HCT116 (cell line): ENCODE measurements at regions of chr12 and their contacts with region 1.

Region 1: GRCh38 chr12:131830335-131830913 is 2.2 kb downstream of the MMP17 start:
- DNase-seq: peak; percentile 23
- ATAC-seq: peak; percentile 71
- H3K4me3 ChIP-seq: peak overlapping the region; percentile 70 to 79
- H3K27ac ChIP-seq: peak overlapping the region; percentile 37; the same call in 1 of the 2 replicates
- H3K4me1 ChIP-seq: peaks cover 12 to 26% of the 10 kb centered on the region in 2 experiments; a peak in 3 of 4 replicates
- H3K27me3 ChIP-seq: no peaks in the 10 kb centered on the region
- CTCF ChIP-seq: peak; percentile 49 to 75 (median 70)
- POLR2A ChIP-seq: no peak
- RAD21 ChIP-seq: peak; percentile 95

Region 2: GRCh38 chr12:130761537-130762318 is 1068.7 kb before region 1 on chr12:
- CTCF ChIA-PET with region 1: no interaction called
- POLR2A ChIA-PET with region 1: no interaction called
- RAD21 ChIA-PET with region 1: no interaction called
- intact Hi-C with region 1: loop called (anchors 5 kb)
- DNase-seq: peak; percentile 29
- ATAC-seq: peak; percentile 72
- H3K4me3 ChIP-seq: no peak overlapping the region
- H3K27ac ChIP-seq: no peak overlapping the region
- H3K4me1 ChIP-seq: no peaks in the 10 kb centered on the region
- H3K27me3 ChIP-seq: no peaks in the 10 kb centered on the region
- CTCF ChIP-seq: peak; percentile 49 to 55 (median 52); a peak in 5 of 6 replicates
- POLR2A ChIP-seq: no peak
- RAD21 ChIP-seq: peak; percentile 86

Region 3: GRCh38 chr12:130916251-130916911 is 914.0 kb before region 1 on chr12:
- CTCF ChIA-PET with region 1: no interaction called
- POLR2A ChIA-PET with region 1: no interaction called
- RAD21 ChIA-PET with region 1: no interaction called
- intact Hi-C with region 1: loop called (anchors 2 kb)
- DNase-seq: peak; percentile 38
- ATAC-seq: peak; percentile 94
- H3K4me3 ChIP-seq: peak overlapping the region in 1 of 2 experiments; percentile 11; a peak in 2 of 4 replicates
- H3K27ac ChIP-seq: no peak overlapping the region
- H3K4me1 ChIP-seq: peaks cover 2 to 6% of the 10 kb centered on the region in 2 experiments; a peak in 1 of 4 replicates
- H3K27me3 ChIP-seq: peaks cover 10% of the 10 kb centered on the region; the same call in 1 of the 2 replicates
- CTCF ChIP-seq: peak; percentile 78 to 92 (median 87)
- POLR2A ChIP-seq: no peak
- RAD21 ChIP-seq: peak; percentile 97

Region 4: DNA sequence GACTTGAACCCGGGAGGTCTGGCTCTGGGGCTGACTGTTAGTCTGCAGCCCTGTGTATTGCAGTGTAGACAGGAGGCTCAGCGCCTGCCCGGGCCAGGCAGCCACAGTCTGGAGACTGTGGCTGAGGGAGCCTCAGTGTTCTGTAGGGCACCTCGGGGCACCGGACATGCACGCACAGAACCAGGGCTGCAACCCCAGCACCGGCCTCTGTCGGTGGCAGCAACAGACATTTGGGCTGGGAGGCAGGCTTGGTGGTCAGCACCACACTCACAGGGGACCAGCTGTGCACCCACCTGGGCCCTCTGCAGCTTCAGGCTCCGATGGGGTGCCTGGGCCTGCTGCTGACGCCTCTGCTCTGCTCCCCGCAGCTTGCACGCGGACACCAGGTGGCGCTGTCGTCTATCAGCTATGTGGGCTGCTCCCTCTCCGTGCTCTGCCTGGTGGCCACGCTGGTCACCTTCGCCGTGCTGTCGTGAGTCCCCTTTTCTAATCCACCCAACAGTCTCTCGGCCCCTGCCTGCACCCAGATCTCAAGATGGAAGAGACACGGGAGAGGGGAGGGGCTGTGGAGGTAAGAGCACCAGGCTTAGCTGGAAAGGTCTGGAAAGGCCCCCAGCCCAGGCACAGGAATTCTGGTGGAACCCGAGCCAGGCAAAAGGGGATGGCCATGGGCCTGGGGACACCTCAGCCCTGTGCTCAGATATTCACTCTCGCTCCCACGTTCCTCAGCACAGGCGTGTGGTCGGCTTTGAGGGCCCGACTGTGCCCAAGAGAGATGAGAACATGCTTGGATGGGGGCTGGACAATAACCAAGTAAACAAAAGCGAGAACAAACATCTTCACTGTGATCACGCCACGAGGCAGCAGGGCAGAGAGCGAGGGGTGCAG is 725.7 kb before region 1 on chr12:
- CTCF ChIA-PET with region 1: interaction called, 17 read pairs
- POLR2A ChIA-PET with region 1: no interaction called
- RAD21 ChIA-PET with region 1: no interaction called
- intact Hi-C with region 1: loop called (anchors 2 kb)
- DNase-seq: peak; percentile 64
- ATAC-seq: peak; percentile 99
- H3K4me3 ChIP-seq: no peak overlapping the region
- H3K27ac ChIP-seq: no peak overlapping the region
- H3K4me1 ChIP-seq: 0 out of 4 replicates have a peak, but pooled peaks cover 0 to 5% of the 10 kb centered on the region in 2 experiments
- H3K27me3 ChIP-seq: no peaks in the 10 kb centered on the region; the same call in 1 of the 2 replicates
- CTCF ChIP-seq: peak; percentile 89 to 96 (median 95)
- POLR2A ChIP-seq: no peak
- RAD21 ChIP-seq: peak; percentile 95

Region 5: DNA sequence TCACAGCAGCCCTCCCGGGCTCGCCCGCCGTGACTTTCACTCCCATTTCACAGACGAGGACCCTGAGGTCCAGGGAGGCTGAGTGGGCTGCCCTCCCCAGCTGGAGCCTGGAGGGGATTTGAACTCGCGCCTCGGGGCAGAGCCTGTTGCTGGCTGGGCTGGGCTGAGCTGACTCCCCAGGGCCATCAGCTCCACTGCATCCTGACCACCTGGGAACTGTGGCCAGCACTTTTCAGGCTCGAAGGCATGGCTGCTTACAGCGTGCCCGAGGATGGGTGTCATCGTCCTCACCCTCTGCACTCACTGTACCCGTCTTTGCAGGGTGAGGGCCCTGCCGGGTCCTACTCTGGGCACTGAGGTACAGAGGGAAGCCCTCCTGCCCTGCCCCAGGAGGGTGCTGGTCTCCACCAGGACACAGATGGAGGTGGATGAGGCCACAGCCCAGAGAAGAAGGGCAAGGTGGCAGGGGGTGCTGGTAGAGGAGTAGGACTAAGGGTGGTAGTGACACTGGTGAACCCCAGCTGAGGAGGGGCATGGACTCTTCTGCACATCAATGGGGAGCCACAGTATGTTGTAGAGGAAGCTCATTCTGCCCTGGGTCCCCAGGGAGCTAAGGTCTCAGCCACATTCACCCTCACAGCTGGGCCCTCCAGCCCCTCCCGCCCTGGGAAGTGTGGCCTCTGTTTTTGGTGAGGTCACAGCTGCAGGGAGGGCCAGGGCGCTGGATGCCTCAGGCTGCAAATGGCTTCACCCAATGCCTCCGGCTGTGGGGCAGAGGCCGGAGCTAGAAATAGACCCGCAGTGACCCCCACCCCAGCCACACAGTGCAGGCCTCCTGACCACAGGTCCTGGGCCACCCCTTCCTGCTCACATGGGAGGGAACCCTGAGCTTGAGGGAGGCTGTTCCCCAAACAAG is 484.6 kb before region 1 on chr12:
- CTCF ChIA-PET with region 1: no interaction called
- POLR2A ChIA-PET with region 1: no interaction called
- RAD21 ChIA-PET with region 1: no interaction called
- intact Hi-C with region 1: no loop called
- DNase-seq: no peak
- ATAC-seq: no peak
- H3K4me3 ChIP-seq: no peak overlapping the region
- H3K27ac ChIP-seq: no peak overlapping the region
- H3K4me1 ChIP-seq: no peaks in the 10 kb centered on the region
- H3K27me3 ChIP-seq: 0 out of 2 replicates have a peak, but pooled peaks cover 5% of the 10 kb centered on the region
- CTCF ChIP-seq: no peak
- POLR2A ChIP-seq: no peak
- RAD21 ChIP-seq: no peak

Region 6: DNA sequence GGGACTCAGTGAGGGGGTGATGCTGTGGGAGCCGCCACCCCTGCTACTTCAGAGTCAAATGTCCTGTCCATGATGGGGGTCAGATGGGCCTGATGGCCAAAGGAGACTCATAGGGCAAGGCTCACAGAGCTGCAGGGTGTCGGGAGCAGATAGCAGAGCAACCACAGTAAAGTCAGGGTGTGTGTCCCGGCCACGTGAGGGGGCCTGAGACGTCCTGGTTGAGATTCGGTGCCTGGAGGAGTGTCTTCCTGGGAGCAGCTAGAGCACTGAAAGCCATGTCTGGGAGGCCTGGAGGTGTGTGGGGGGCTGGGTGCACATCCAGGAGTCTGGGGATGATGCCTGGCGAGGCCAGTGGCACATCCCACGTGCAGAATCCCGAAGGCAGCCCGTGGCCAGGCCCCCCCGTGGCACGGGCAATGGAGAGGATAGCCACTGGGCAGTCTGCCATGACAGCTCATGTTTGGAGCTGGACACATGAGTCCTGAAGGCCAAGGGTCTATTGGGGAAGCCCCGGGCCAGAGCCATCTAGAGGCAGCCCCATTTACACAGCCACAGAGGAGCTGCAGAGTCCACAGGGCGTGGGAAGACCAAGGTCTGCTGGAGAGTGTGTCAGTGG is 427.5 kb before region 1 on chr12:
- CTCF ChIA-PET with region 1: no interaction called
- POLR2A ChIA-PET with region 1: no interaction called
- RAD21 ChIA-PET with region 1: no interaction called
- intact Hi-C with region 1: no loop called
- DNase-seq: no peak
- ATAC-seq: no peak
- H3K4me3 ChIP-seq: no peak overlapping the region
- H3K27ac ChIP-seq: no peak overlapping the region; the same call in 1 of the 2 replicates
- H3K4me1 ChIP-seq: peaks cover 7 to 11% of the 10 kb centered on the region in 2 experiments; a peak in 3 of 4 replicates
- H3K27me3 ChIP-seq: peaks cover 21% of the 10 kb centered on the region
- CTCF ChIP-seq: no peak
- POLR2A ChIP-seq: no peak
- RAD21 ChIP-seq: no peak

Region 7: DNA sequence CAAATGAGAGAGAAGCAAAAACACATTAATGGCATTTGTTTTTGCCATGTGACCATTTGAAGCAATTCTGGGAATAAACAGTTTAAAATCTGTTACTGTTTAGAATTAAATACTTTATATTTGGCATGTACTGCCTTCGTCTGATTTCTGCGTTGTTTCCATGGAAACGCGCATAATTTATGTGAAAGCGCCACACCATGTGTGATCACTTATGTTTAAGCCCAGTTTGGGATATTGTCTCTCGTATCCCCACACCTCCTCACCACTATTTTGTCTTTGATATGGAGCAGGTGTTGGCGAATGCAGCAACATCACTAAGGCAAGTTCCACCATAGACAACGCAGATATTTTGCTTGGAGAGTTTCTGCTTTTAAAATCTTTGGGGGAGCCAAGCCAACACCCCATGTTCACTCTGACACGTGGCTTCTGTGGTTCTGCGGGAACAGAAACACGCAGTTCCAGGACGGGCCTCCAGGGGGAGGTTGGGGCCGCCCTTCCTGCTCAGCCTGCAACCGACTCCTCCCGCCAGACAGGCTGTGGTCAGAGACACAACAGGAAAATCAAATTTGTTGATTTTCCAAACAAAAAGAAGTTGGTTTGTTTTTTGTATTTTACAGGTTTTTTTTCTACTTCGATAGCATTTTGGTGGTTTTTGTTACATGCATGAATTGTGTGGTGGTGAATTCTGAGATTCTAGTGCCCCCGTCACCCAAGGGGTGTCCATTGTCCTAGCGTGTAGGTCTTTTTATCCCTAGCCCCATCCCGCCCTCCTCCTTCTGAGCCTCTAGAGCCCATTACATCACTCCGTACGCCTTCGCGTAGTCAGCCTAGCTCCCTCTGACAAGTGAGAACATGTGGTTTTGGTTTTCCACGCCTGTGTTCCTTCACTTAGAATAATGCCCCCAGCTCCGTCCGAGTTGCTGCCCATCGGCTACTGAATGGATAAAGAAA is 221.4 kb before region 1 on chr12:
- CTCF ChIA-PET with region 1: no interaction called
- POLR2A ChIA-PET with region 1: no interaction called
- RAD21 ChIA-PET with region 1: no interaction called
- intact Hi-C with region 1: loop called (anchors 1 kb)
- DNase-seq: peak; percentile 43
- ATAC-seq: peak; percentile 97
- H3K4me3 ChIP-seq: no peak overlapping the region
- H3K27ac ChIP-seq: no peak overlapping the region
- H3K4me1 ChIP-seq: peaks cover 0 to 7% of the 10 kb centered on the region in 2 experiments; a peak in 1 of 4 replicates
- H3K27me3 ChIP-seq: peaks cover 3% of the 10 kb centered on the region; the same call in 1 of the 2 replicates
- CTCF ChIP-seq: peak; percentile 74 to 93 (median 84)
- POLR2A ChIP-seq: no peak
- RAD21 ChIP-seq: peak; percentile 84

Region 8: DNA sequence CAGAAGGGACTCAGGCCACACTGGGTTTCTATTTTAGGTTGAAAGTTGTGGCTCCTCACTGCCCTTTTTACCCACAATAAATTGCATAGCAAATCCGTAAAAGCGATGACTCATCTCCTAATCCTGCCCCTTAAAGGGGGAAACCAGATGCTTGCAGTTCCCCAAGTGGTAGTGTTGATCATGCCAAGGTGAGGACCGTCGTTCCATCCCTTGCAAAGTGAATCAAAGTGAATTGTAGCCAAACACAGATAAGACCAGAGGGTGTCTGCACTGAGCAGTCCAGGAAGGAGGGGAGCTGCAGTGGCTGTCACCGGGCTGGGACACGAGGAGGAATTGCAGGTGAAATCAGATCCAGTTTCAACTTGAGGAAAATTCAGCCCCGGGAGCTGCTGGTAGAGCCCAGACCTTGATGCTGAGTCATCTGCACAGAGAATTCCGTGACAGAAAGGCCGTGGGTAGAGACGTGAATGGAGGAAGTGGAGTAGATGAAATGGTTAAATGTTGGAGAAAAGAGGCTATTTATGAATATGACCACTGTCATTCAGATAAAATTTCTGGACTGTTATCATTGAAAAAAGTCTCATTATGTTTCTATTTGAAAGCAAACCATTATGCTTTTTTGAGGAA is 46.4 kb before region 1 on chr12:
- CTCF ChIA-PET with region 1: no interaction called
- POLR2A ChIA-PET with region 1: no interaction called
- RAD21 ChIA-PET with region 1: no interaction called
- intact Hi-C with region 1: no loop called
- DNase-seq: peak; percentile 73
- ATAC-seq: peak; percentile 83
- H3K4me3 ChIP-seq: peak overlapping the region; percentile 26 to 52
- H3K27ac ChIP-seq: peak overlapping the region; percentile 73
- H3K4me1 ChIP-seq: peaks cover 23 to 33% of the 10 kb centered on the region in 2 experiments
- H3K27me3 ChIP-seq: no peaks in the 10 kb centered on the region
- CTCF ChIP-seq: no peak
- POLR2A ChIP-seq: no peak
- RAD21 ChIP-seq: peak; percentile 26; the same call in 1 of the 2 replicates

Region 9: GRCh38 chr12:132847363-132848356 is 1017.2 kb after region 1 on chr12:
- CTCF ChIA-PET with region 1: no interaction called
- POLR2A ChIA-PET with region 1: no interaction called
- RAD21 ChIA-PET with region 1: no interaction called
- intact Hi-C with region 1: no loop called
- DNase-seq: no peak
- ATAC-seq: no peak
- H3K4me3 ChIP-seq: no peak overlapping the region
- H3K27ac ChIP-seq: no peak overlapping the region
- H3K4me1 ChIP-seq: no peaks in the 10 kb centered on the region
- H3K27me3 ChIP-seq: no peaks in the 10 kb centered on the region
- CTCF ChIP-seq: no peak
- POLR2A ChIP-seq: no peak
- RAD21 ChIP-seq: no peak